PC-9 (cell line): ENCODE measurements at regions of chr7 and their contacts with region 1.

Region 1: GRCh38 chr7:569996-570800 is 50.6 kb upstream of the PDGFA start:
- DNase-seq: no peak
- H3K4me3 ChIP-seq: no peak overlapping the region
- H3K27ac ChIP-seq: no peak overlapping the region
- H3K4me1 ChIP-seq: no peaks in the 10 kb centered on the region
- H3K27me3 ChIP-seq: no peaks in the 10 kb centered on the region
- CTCF ChIP-seq: no peak

Region 2: GRCh38 chr7:421136-421991 is 148.8 kb before region 1 on chr7:
- CTCF ChIA-PET with region 1: interaction called, 12 read pairs
- POLR2A ChIA-PET with region 1: no interaction called
- intact Hi-C with region 1: no loop called
- DNase-seq: no peak
- H3K4me3 ChIP-seq: no peak overlapping the region
- H3K27ac ChIP-seq: no peak overlapping the region
- H3K4me1 ChIP-seq: no peaks in the 10 kb centered on the region
- H3K27me3 ChIP-seq: peaks cover 87% of the 10 kb centered on the region
- CTCF ChIP-seq: no peak

Region 3: DNA sequence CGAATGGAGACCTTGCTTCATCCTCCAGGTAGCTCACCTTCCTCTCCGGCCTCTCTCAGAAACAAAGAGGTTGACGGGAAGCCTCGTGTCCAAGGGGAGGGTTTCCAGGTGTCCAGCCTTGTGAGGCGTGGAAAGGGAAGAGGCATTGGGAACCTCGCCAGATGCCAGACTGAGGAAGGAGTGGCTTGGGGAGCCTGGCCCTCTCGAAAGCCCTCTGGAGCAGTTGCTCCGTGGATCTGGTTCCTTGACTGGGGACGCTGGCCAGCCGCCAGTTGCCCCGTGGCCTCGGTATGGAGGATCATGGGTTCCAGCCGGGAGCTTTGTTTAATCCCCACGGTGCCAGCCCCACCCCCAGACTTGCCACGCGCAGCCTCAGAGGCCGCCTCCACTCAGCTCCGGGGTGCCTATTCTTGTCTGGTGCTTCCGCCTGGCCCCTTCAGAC is 231.8 kb after region 1 on chr7:
- CTCF ChIA-PET with region 1: no interaction called
- POLR2A ChIA-PET with region 1: no interaction called
- intact Hi-C with region 1: no loop called
- DNase-seq: peak in 1 of 2 experiments; percentile 66
- H3K4me3 ChIP-seq: no peak overlapping the region
- H3K27ac ChIP-seq: no peak overlapping the region
- H3K4me1 ChIP-seq: no peaks in the 10 kb centered on the region
- H3K27me3 ChIP-seq: no peaks in the 10 kb centered on the region
- CTCF ChIP-seq: no peak